Ovary (tissue), 10 donors: ENCODE measurements at regions of chr17 and their contacts with region 1.

Region 1: DNA sequence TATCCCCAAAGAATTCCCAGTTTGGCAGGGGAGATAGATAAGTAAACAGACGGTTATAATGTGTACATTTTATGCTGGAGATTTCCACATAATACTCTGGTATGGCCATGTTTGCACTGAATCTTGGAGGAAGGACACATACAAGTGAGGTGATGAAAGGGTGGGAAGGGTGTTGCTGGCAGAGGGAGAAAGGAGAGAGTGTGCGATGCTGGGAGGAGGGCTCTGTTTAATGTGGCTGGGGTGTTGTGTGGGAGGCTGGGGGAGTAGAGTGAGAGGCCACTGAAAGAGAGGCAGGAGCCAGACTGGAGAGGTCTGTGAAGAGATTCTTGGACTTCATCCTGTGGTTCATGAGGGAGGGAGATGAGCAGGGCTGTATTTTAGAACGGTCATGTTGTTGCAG is 87.6 kb downstream of the SPACA3 start:
- DNase-seq: no peak
- H3K4me3 ChIP-seq: no peak overlapping the region
- H3K27ac ChIP-seq: no peak overlapping the region
- H3K4me1 ChIP-seq: no peaks in the 10 kb centered on the region
- H3K27me3 ChIP-seq: no peaks in the 10 kb centered on the region
- CTCF ChIP-seq: no peak
- EP300 ChIP-seq: no peak
- POLR2A ChIP-seq: no peak

Region 2: GRCh38 chr17:32859857-32860525 is 219.2 kb before region 1 on chr17:
- intact Hi-C with region 1: no loop called
- DNase-seq: no peak
- H3K4me3 ChIP-seq: no peak overlapping the region
- H3K27ac ChIP-seq: no peak overlapping the region
- H3K4me1 ChIP-seq: peaks cover 7% of the 10 kb centered on the region
- H3K27me3 ChIP-seq: no peaks in the 10 kb centered on the region
- CTCF ChIP-seq: no peak
- EP300 ChIP-seq: no peak
- POLR2A ChIP-seq: no peak

Region 3: DNA sequence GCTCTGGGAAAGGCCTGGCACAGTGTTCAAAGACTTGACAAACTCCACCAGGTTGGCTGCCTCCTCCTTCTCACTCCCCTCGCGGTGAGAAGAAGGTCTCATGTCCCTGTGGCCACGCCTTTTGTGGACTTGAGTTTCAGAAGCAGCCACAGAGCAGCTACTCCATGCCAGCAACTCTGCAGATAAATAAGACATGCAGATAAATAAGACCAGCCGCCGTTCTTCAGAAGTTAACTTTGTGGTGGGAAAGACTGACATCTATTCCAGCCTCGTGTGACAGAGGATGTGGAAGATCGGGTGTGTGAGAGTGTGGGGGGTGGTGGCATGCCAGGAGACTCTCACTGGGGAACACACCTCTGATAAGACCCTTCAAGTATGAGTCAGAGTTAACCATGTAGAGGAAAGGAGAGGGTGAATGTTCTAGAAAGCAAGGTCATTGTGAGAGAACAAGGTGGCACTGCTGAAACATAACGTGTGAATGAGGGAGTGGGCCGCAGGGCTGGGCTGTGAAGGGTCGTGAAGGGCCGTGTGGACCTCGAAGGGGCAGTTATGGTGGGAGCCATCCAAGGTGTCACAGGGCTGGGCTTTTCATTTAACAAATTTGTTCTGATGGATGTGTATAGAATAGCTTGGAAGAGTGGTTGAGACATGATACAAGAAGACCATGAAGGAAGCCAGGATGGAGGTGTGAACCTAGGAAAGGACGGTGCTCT is 86.7 kb before region 1 on chr17:
- intact Hi-C with region 1: no loop called
- DNase-seq: no peak
- H3K4me3 ChIP-seq: no peak overlapping the region
- H3K27ac ChIP-seq: no peak overlapping the region
- H3K4me1 ChIP-seq: no peaks in the 10 kb centered on the region
- H3K27me3 ChIP-seq: no peaks in the 10 kb centered on the region
- CTCF ChIP-seq: no peak
- EP300 ChIP-seq: no peak
- POLR2A ChIP-seq: no peak

Region 4: DNA sequence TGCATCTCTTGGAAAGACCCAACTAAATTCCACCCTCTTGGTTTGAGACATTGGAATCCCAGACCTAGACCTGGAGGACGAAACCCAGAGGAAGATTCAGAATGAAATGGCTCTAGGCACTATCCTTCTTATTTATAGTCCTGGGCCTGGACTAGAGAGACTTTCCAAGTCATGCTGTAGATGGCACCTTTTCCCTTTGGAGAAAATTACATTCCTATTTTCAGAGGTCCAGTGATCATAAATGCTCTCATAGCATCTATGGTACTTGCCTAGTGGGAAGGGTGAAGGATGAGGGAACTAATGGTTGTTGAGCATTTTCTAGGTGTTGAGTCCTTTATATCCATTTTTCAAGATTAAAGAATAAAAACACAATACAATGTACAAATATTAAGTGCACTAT is 50.4 kb before region 1 on chr17:
- intact Hi-C with region 1: loop called in 2 of 4 experiments (anchors 5 to 10 kb)
- DNase-seq: no peak
- H3K4me3 ChIP-seq: no peak overlapping the region
- H3K27ac ChIP-seq: no peak overlapping the region
- H3K4me1 ChIP-seq: no peaks in the 10 kb centered on the region
- H3K27me3 ChIP-seq: no peaks in the 10 kb centered on the region
- CTCF ChIP-seq: no peak
- EP300 ChIP-seq: no peak
- POLR2A ChIP-seq: no peak